Dorsolateral prefrontal cortex (tissue), 120 donors: ENCODE measurements at regions of chr2 and their contacts with region 1.

Region 1: GRCh38 chr2:219206442-219207253 is at the start of gene ZFAND2B:
- DNase-seq: peak; percentile 86 to 98 (median 95)
- H3K4me3 ChIP-seq: peak within 1 kb of the TSS; percentile 52 to 95 (median 80)
- H3K27ac ChIP-seq: peak within 1 kb of the TSS; percentile 85 to 99 (median 97)
- H3K27me3 ChIP-seq: no peaks in the 10 kb centered on the region
- CTCF ChIP-seq: peak in 34 of 56 donors; percentile 3 to 57 (median 26)
- total RNA-seq, gene ZFAND2B: 32.2 to 63.9 (median 46.1) TPM

Region 2: GRCh38 chr2:219057709-219058540 is 148.7 kb before region 1 on chr2:
- intact Hi-C with region 1: no loop called
- DNase-seq: peak; percentile 59 to 87 (median 74)
- H3K4me3 ChIP-seq: peak overlapping the region in 55 of 59 donors; percentile 6 to 62 (median 45)
- H3K27ac ChIP-seq: no peak overlapping the region
- H3K27me3 ChIP-seq: peaks cover 11 to 78% (median 62%) of the 10 kb centered on the region in 45 donors
- CTCF ChIP-seq: peak; percentile 48 to 98 (median 92)

Region 3: DNA sequence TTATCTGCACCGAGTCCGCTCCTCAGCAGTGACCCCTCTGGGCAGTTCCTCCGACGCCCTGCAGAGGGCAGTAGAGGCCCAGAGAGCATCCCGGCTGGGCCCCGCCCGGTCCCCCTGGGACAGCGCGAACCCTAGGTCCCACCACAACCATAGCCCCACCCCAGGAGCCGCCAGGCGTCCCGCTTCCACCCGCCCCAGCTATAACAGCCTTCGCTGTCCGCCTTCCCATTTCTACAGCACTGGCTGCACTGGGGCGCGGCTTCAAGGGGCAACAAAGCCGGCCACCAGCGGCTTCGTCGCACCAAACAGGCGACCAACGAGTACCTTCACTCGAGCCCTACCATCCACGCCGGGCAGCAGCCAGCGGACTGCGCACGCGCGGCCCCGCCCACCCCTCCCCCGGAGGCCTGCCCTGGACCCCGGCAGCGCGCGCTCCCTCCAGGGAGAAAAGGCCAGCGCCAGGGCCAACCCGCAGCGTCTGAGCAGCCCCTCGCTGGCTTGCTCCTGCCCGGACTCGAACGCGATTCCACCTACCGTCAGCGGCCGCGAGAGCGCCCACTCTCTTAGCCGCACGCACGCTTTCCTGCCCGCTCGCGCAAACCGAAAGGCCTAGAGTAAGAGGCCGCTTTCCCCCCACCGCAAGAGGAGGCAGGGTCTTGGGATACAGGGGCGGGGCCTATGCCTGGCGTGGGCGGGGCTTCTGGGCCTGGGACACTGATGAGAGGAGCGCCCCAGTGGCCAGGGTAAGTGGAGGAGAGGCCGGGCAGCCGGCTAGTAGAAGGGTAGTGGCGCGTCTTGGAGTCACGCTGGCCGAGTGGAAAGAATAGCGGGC is 46.2 kb before region 1 on chr2 and contains the start of gene NHEJ1:
- intact Hi-C with region 1: no loop called
- DNase-seq: peak; percentile 93 to 97 (median 96)
- H3K4me3 ChIP-seq: peak within 1 kb of the TSS; percentile 56 to 97 (median 75)
- H3K27ac ChIP-seq: peak within 1 kb of the TSS; percentile 86 to 99 (median 96)
- H3K27me3 ChIP-seq: no peaks in the 10 kb centered on the region
- CTCF ChIP-seq: peak; percentile 91 to 100 (median 99)
- total RNA-seq, gene NHEJ1: 5.8 to 16.8 (median 10.2) TPM

Region 4: DNA sequence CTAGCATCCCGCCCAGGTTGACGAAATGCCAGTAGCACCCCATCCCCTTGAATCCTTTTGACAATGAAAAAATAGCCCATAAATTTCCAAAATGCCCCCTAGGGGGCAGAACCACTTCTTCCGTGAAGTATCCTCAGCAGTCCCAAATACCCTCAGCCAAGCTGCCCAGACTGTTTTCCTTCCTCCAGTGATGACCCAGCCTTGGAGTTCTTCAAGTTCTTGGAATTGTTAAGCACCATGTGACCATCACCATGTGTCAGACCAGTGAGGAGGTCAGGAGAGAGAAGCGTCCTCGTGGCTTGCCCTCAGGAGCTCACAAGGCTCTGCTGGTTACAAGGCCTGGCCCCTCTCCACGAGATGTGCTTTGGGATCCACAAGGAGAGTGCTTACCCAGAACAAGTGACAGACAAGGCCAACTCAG is 35.4 kb before region 1 on chr2:
- intact Hi-C with region 1: loop called in 1 of 2 experiments (anchors 5 kb)
- DNase-seq: peak in 2 of 10 donors; percentile 35 to 38
- H3K4me3 ChIP-seq: no peak overlapping the region
- H3K27ac ChIP-seq: peak overlapping the region in 49 of 59 donors; percentile 13 to 83 (median 57)
- H3K27me3 ChIP-seq: no peaks in the 10 kb centered on the region
- CTCF ChIP-seq: peak; percentile 55 to 88 (median 72)

Region 5: GRCh38 chr2:219218732-219219701 is 12.4 kb after region 1 on chr2 and contains the start of gene ABCB6:
- intact Hi-C with region 1: loop called in 1 of 2 experiments (anchors 1 kb)
- DNase-seq: peak; percentile 94 to 99 (median 98)
- H3K4me3 ChIP-seq: peak within 1 kb of the TSS; percentile 40 to 95 (median 71)
- H3K27ac ChIP-seq: peak within 1 kb of the TSS; percentile 49 to 96 (median 91)
- H3K27me3 ChIP-seq: no peaks in the 10 kb centered on the region
- CTCF ChIP-seq: peak in 13 of 56 donors; percentile 2 to 55 (median 19)
- total RNA-seq, gene ABCB6: 25.8 to 68.6 (median 40.0) TPM

Region 6: DNA sequence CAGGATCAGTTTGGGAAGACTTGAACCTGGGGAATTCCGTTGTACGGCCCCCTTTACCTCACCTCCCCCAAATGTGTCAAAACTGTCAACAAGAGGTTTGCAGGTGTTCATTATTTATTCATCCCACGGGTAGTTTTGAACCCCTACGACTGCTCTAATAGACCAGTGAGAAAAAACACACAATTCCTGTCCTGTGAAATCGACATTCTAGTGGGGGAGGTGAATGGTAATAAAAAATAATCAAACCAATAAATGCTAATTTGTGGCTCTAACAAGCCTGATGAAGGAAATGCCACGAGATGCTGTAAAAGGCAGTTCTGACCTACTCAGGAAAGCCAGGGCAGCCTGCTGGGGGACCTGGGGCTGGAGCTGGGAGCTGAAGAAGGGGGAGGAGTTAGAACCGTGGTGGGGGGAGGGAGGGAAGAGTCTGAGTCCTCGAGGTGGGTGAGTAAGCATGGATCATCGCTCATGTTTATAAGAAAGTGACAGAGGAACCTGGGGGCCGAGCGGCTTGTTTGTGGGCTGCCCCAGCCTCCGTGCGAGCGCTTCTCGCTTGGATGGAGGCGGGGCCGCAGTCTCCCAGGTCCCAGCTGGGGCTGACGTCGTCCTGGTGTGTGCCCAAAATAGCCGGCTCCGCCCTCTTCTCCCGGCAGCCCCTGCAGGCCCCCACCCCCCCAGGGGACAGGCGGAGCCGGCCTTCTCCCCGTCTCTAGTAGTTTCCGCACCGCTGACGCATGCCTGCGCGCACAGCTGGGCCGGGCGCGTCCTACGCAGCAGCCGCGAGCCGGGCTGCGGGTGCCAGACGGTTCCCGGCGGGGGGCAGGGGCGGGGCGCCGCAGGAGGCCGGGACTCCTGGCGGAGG is 72.2 kb after region 1 on chr2 and contains the start of gene DNAJB2:
- intact Hi-C with region 1: loop called in 1 of 2 experiments (anchors 2 kb)
- DNase-seq: peak; percentile 98 to 99 (median 99)
- H3K4me3 ChIP-seq: peak within 1 kb of the TSS; percentile 73 to 99 (median 92)
- H3K27ac ChIP-seq: peak within 1 kb of the TSS; percentile 97 to 100 (median 100)
- H3K27me3 ChIP-seq: no peaks in the 10 kb centered on the region
- CTCF ChIP-seq: peak in 28 of 56 donors; percentile 2 to 57 (median 28)
- total RNA-seq, gene DNAJB2: 197 to 638 (median 283) TPM